BJ (cell line): ENCODE measurements at regions of chr12 and their contacts with region 1.

Region 1: GRCh38 chr12:43882578-43883178 is 46.8 kb downstream of the TMEM117 start:
- DNase-seq: peak; percentile 4
- H3K4me3 ChIP-seq: no peak overlapping the region
- H3K27me3 ChIP-seq: no peaks in the 10 kb centered on the region
- CTCF ChIP-seq: peak; percentile 83

Region 2: GRCh38 chr12:43758728-43759563 is 123.7 kb before region 1 on chr12 and contains the starts of genes IRAK4 and PUS7L:
- CTCF ChIA-PET with region 1: interaction called, 11 read pairs
- POLR2A ChIA-PET with region 1: no interaction called
- DNase-seq: peak; percentile 84
- H3K4me3 ChIP-seq: peak within 1 kb of the TSS; percentile 60
- H3K27me3 ChIP-seq: no peaks in the 10 kb centered on the region
- CTCF ChIP-seq: peak; percentile 70
- polyA plus RNA-seq, gene IRAK4: 11.3 and 16.4 TPM in 2 replicates
- polyA plus RNA-seq, gene PUS7L: 3.5 and 6.9 TPM in 2 replicates

Region 3: GRCh38 chr12:43776498-43776897 is 106.2 kb before region 1 on chr12:
- CTCF ChIA-PET with region 1: interaction called, 28 read pairs
- POLR2A ChIA-PET with region 1: no interaction called
- DNase-seq: no peak
- H3K4me3 ChIP-seq: no peak overlapping the region
- H3K27me3 ChIP-seq: no peaks in the 10 kb centered on the region
- CTCF ChIP-seq: peak; percentile 36; the same call in 1 of the 2 replicates

Region 4: GRCh38 chr12:43805860-43806736 is 76.6 kb before region 1 on chr12 and contains the start of gene TWF1:
- CTCF ChIA-PET with region 1: interaction called, 13 read pairs
- POLR2A ChIA-PET with region 1: interaction called, 4 read pairs
- DNase-seq: no peak
- H3K4me3 ChIP-seq: peak within 1 kb of the TSS; percentile 87
- H3K27me3 ChIP-seq: 0 out of 2 replicates have a peak, but pooled peaks cover 1% of the 10 kb centered on the region
- CTCF ChIP-seq: peak; percentile 36; the same call in 1 of the 2 replicates
- polyA plus RNA-seq, gene TWF1: 49.8 and 109 TPM in 2 replicates

Region 5: DNA sequence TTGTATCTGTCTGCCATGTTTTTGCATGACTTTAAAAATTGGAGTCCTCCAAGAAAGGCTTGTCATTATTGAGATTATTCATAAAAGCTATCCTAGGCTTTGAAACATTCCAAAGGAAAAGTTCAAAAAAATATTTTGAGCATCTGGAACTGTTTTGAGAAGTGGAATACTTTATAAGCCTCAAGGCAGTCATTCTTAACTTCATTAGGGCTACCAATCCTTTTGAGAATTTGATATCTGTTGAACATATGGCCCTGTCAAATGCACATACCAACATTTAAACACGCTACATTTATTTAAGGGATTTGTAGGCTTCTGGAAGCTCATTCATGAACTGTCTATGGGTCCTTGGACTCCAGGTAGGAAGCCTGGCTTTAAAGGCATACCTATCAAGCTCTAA is 30.2 kb after region 1 on chr12:
- CTCF ChIA-PET with region 1: no interaction called
- POLR2A ChIA-PET with region 1: no interaction called
- DNase-seq: peak; percentile 4
- H3K4me3 ChIP-seq: no peak overlapping the region
- H3K27me3 ChIP-seq: no peaks in the 10 kb centered on the region
- CTCF ChIP-seq: no peak